Endothelial cell of umbilical vein (primary cell): ENCODE measurements at regions of chr4 and their contacts with region 1.

Region 1: GRCh38 chr4:183355405-183355804 is 33.2 kb upstream of the CLDN24 start:
- DNase-seq: peak; percentile 94
- H3K4me3 ChIP-seq: no peak overlapping the region
- H3K27ac ChIP-seq: no peak overlapping the region
- H3K4me1 ChIP-seq: peaks cover 19% of the 10 kb centered on the region
- H3K27me3 ChIP-seq: peaks cover 0 to 2% of the 10 kb centered on the region in 2 experiments
- CTCF ChIP-seq: no peak
- POLR2A ChIP-seq: peak; percentile 6

Region 2: GRCh38 chr4:183374950-183375555 is 19.6 kb after region 1 on chr4:
- CTCF ChIA-PET with region 1: no interaction called
- POLR2A ChIA-PET with region 1: no interaction called
- dilution Hi-C with region 1: no loop called
- intact Hi-C with region 1: loop called (anchors 2 kb)
- DNase-seq: no peak
- H3K4me3 ChIP-seq: no peak overlapping the region
- H3K27ac ChIP-seq: no peak overlapping the region
- H3K4me1 ChIP-seq: no peaks in the 10 kb centered on the region
- H3K27me3 ChIP-seq: peaks cover 0 to 4% of the 10 kb centered on the region in 2 experiments
- CTCF ChIP-seq: no peak
- POLR2A ChIP-seq: no peak

Region 3: GRCh38 chr4:183398227-183399125 is 43.1 kb after region 1 on chr4:
- CTCF ChIA-PET with region 1: interaction called, 7 read pairs
- POLR2A ChIA-PET with region 1: no interaction called
- dilution Hi-C with region 1: no loop called
- intact Hi-C with region 1: loop called (anchors 2 kb)
- DNase-seq: peak; percentile 79
- H3K4me3 ChIP-seq: peak overlapping the region; percentile 8 to 43 (median 36)
- H3K27ac ChIP-seq: no peak overlapping the region
- H3K4me1 ChIP-seq: peaks cover 6% of the 10 kb centered on the region
- H3K27me3 ChIP-seq: no peaks in the 10 kb centered on the region
- CTCF ChIP-seq: peak; percentile 52 to 84
- POLR2A ChIP-seq: peak; percentile 33